ENCODE measurements at regions of chr13 and their contacts with region 1.

Region 1: DNA sequence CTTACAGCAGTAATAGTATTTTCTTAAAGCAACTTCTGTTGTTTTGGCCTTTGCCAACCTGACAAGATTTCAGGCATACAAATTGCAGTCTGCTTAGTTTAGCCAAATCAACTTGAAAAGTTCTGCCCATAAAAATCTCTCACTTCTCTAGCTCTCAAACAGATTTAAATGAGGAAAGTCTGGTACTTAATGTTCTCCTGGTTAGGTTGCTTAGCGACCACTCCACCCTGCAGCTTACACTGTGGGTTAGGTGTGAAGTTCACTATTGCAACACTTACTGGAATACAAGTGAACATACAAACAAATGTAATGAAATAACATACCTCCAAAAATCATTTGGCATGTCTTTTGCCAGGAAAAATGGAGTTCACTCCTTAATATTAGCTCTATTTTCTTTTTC is 178.7 kb upstream of the PCDH9 start:
- DNase-seq: peak; percentile 83
- H3K4me3 Mint-ChIP-seq: no peak overlapping the region
- H3K27ac Mint-ChIP-seq: peak overlapping the region; percentile 90
- H3K4me1 Mint-ChIP-seq: peaks cover 23% of the 10 kb centered on the region
- H3K27me3 Mint-ChIP-seq: no peaks in the 10 kb centered on the region
- CTCF ChIP-seq: no peak

Region 2: DNA sequence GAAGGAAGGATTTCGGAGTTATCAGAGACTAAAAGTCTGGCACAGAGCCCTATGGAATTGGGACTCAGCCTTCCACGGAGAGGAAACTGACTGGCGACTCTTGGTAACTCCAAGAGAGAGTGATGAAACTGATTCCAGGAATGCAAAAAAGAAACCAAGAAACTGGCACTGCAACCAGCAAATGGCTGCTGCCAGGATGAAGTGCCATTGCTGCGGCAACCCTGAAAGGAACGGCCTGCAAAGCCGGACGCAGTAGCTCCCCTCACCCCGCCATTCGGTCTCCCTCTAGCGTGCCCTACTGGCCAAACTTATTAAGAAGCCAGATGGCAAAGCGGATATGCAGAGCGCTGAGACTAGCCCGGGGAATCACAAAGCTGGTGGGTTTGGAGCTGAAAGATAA is 414.7 kb before region 1 on chr13:
- CTCF ChIA-PET with region 1: no interaction called
- POLR2A ChIA-PET with region 1: no interaction called
- intact Hi-C with region 1: no loop called
- DNase-seq: peak; percentile 70
- H3K4me3 Mint-ChIP-seq: peak overlapping the region; percentile 46
- H3K27ac Mint-ChIP-seq: peak overlapping the region; percentile 31
- H3K4me1 Mint-ChIP-seq: peaks cover 13% of the 10 kb centered on the region
- H3K27me3 Mint-ChIP-seq: no peaks in the 10 kb centered on the region
- CTCF ChIP-seq: peak; percentile 42

Region 3: DNA sequence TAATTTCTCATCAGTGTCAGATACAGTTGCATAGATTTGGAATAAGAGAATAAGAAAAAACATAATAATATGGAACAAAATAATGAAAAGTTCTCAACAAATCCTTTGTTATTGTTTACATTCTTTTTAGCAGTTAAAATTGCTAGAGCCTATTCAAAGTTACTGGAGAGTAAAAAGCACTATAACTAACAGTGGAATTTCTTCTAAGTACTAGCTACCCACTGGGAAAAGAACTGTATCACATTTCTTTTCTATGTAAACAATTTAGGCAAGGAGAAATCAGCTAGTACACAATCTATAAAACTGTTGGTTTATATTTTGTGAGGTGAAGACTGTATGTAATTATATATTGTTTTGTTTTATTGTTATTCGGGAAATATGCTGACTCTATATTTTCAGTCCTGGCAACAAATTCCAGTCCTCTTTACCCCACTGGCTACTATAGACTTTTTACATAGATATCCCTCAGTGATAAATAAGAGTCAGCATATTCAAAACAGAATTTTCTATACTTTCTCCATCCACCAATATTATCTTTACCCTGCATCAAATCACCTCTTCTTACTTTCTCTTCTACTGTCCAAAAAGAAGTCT is 400.6 kb before region 1 on chr13:
- CTCF ChIA-PET with region 1: no interaction called
- POLR2A ChIA-PET with region 1: no interaction called
- intact Hi-C with region 1: no loop called
- DNase-seq: no peak
- H3K4me3 Mint-ChIP-seq: no peak overlapping the region
- H3K27ac Mint-ChIP-seq: no peak overlapping the region
- H3K4me1 Mint-ChIP-seq: no peaks in the 10 kb centered on the region
- H3K27me3 Mint-ChIP-seq: no peaks in the 10 kb centered on the region
- CTCF ChIP-seq: no peak

Region 4: GRCh38 chr13:67230404-67231288 is 178.2 kb before region 1 on chr13:
- CTCF ChIA-PET with region 1: interaction called, 3 read pairs
- POLR2A ChIA-PET with region 1: interaction called, 3 read pairs
- intact Hi-C with region 1: loop called (anchors 5 kb)
- DNase-seq: peak; percentile 96
- H3K4me3 Mint-ChIP-seq: no peak overlapping the region
- H3K27ac Mint-ChIP-seq: no peak overlapping the region
- H3K4me1 Mint-ChIP-seq: peaks cover 14% of the 10 kb centered on the region
- H3K27me3 Mint-ChIP-seq: no peaks in the 10 kb centered on the region
- CTCF ChIP-seq: no peak

Region 5: GRCh38 chr13:67299072-67299635 is 109.6 kb before region 1 on chr13:
- CTCF ChIA-PET with region 1: no interaction called
- POLR2A ChIA-PET with region 1: interaction called, 4 read pairs
- intact Hi-C with region 1: loop called (anchors 5 kb)
- DNase-seq: peak; percentile 62
- H3K4me3 Mint-ChIP-seq: no peak overlapping the region
- H3K27ac Mint-ChIP-seq: peak overlapping the region; percentile 64
- H3K4me1 Mint-ChIP-seq: peaks cover 30% of the 10 kb centered on the region
- H3K27me3 Mint-ChIP-seq: no peaks in the 10 kb centered on the region
- CTCF ChIP-seq: no peak

Region 6: DNA sequence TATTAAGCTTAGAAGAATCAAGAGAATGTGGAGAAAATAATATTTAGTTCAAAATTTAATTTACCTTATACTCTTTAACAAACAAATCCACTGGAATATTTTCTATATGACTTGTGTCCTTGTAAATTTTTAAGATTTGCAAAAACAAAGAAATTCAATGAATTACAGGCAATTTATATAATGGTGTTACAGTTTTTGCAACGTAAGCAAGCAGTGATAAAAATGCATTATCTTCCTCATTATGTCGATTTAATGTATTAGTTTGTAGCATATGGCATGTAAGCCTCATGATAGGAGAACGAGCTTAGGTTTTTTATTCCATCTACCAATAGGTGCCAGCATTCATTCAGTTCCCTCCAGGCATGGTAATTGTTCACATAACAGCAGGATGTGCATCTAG is 78.6 kb before region 1 on chr13:
- CTCF ChIA-PET with region 1: no interaction called
- POLR2A ChIA-PET with region 1: no interaction called
- intact Hi-C with region 1: no loop called
- DNase-seq: no peak
- H3K4me3 Mint-ChIP-seq: no peak overlapping the region
- H3K27ac Mint-ChIP-seq: no peak overlapping the region
- H3K4me1 Mint-ChIP-seq: no peaks in the 10 kb centered on the region
- H3K27me3 Mint-ChIP-seq: no peaks in the 10 kb centered on the region
- CTCF ChIP-seq: no peak